CD4-positive, alpha-beta T cell (primary cell): ENCODE measurements at regions of chr11 and their contacts with region 1.

Region 1: GRCh38 chr11:122690801-122691548 is 35.5 kb downstream of the UBASH3B start:
- DNase-seq: peak in 4 of 14 experiments; percentile 23 to 45 (median 40)
- ATAC-seq: peak; percentile 68
- H3K4me3 ChIP-seq: peak overlapping the region; percentile 34
- H3K4me3 Mint-ChIP-seq: peak overlapping the region; percentile 84
- H3K27ac ChIP-seq: peak overlapping the region; percentile 46 to 71
- H3K27ac Mint-ChIP-seq: peak overlapping the region; percentile 87
- H3K4me1 ChIP-seq: peaks cover 76% of the 10 kb centered on the region
- H3K4me1 Mint-ChIP-seq: peaks cover 84% of the 10 kb centered on the region
- H3K27me3 ChIP-seq: no peaks in the 10 kb centered on the region
- H3K27me3 Mint-ChIP-seq: no peaks in the 10 kb centered on the region
- CTCF ChIP-seq: no peak

Region 2: GRCh38 chr11:122668562-122669090 is 22.3 kb before region 1 on chr11:
- CTCF ChIA-PET with region 1: interaction called, 3 read pairs
- POLR2A ChIA-PET with region 1: interaction called, 91 read pairs
- intact Hi-C with region 1: no loop called
- DNase-seq: peak in 3 of 14 experiments; percentile 47 to 80 (median 47)
- ATAC-seq: peak; percentile 70
- H3K4me3 ChIP-seq: no peak overlapping the region
- H3K4me3 Mint-ChIP-seq: peak overlapping the region; percentile 80
- H3K27ac ChIP-seq: peak overlapping the region in 1 of 2 donors; percentile 59
- H3K27ac Mint-ChIP-seq: peak overlapping the region; percentile 73
- H3K4me1 ChIP-seq: peaks cover 97% of the 10 kb centered on the region
- H3K4me1 Mint-ChIP-seq: peaks cover 73% of the 10 kb centered on the region
- H3K27me3 ChIP-seq: no peaks in the 10 kb centered on the region
- H3K27me3 Mint-ChIP-seq: no peaks in the 10 kb centered on the region
- CTCF ChIP-seq: no peak